Left lung (tissue), 14 donors: ENCODE measurements at regions of chr3 and their contacts with region 1.

Region 1: GRCh38 chr3:62559831-62560445 is 186.6 kb upstream of the FEZF2 start:
- DNase-seq: peak in 1 of 4 donors; percentile 31
- ATAC-seq: peak; percentile 70
- H3K4me3 ChIP-seq: no peak overlapping the region
- H3K27ac ChIP-seq: no peak overlapping the region
- H3K4me1 ChIP-seq: no peaks in the 10 kb centered on the region
- H3K27me3 ChIP-seq: no peaks in the 10 kb centered on the region
- CTCF ChIP-seq: no peak

Region 2: DNA sequence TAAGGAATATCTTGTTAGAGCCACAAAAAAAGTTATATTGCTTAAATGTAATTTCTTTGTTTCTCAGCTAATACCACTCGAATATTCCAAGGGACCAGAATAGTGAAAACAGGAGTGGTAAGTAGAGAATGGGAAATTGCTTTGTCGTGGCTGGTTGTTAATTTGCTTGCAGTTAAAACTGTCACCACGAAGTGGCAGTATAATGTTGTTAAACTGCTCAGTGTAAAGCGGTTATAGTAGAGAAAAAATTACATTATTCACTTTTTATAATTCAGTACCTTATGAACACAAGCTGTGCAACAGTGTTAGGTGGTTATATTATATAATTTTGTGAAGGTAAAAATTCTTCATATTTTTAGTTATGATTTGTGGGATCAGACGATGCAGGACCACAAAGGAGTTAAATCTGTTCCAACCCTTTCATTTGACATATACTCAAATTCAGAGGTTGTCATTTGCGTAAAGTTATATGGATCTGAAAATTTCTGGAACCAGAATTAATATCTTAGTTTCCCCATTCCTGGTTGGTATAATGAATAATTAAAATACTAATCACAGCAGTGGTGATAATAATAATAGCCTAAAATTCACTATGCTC is 358.4 kb before region 1 on chr3:
- intact Hi-C with region 1: loop called in 1 of 2 experiments (anchors 10 kb)
- DNase-seq: peak in 1 of 4 donors; percentile 42
- ATAC-seq: peak; percentile 77
- H3K4me3 ChIP-seq: no peak overlapping the region
- H3K27ac ChIP-seq: no peak overlapping the region
- H3K4me1 ChIP-seq: no peaks in the 10 kb centered on the region
- H3K27me3 ChIP-seq: no peaks in the 10 kb centered on the region
- CTCF ChIP-seq: peak in 1 of 2 donors; percentile 51